H1 (cell line): ENCODE measurements at regions of chr7 and their contacts with region 1.

Region 1: DNA sequence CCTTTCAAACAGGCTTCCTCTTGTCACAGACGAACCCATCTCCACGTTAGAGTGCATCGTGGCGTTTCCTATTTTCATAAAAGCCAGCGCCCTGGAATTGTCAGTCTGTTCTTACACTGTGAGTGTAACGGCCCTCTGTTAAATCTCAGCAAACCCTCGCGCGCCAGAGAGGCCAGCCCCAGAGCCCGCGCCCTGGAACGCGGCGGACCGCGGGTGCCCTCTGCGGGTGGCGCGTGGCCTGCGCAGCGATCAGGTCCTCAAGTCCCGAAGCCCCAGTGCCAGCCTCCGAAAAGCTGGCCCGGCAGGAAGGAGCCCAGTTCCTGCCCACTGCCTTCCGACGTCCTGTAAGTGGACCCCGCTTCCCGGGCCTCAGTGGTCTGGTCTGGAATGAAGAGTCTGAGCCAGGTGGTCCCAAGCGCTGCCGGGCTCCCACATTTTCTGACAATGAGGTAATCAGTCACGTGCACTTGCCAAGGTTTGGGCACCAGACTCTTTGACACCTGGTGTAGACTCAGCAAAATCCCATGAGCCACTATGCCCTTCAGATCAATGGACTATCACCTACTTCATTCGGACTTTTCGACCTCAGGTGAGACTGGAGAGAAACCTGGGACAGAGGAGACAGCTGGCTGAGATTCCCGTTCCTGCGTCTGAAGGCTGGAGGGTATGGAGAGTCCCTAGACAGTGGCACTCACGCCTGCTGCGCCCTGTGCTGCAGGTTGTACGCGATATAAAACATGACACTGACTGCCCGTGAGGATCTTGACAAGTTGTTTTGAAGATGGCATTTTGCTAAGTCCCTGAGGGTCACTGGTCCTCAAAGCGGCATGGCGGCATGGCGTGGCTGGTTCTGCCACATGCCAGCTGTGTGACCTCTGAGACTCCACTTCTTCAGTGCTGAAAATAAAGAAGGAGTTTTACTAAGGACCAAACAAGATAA is 109.4 kb upstream of the LANCL2 start:
- DNase-seq: peak; percentile 46 to 87
- H3K4me3 ChIP-seq: peak overlapping the region; percentile 32 to 69 (median 61)
- H3K27ac ChIP-seq: no peak overlapping the region
- H3K4me1 ChIP-seq: peaks cover 0 to 4% (median 2%) of the 10 kb centered on the region in 4 experiments; a peak in 3 of 7 replicates
- H3K27me3 ChIP-seq: peaks cover 11 to 41% (median 27%) of the 10 kb centered on the region in 4 experiments
- CTCF ChIP-seq: peak; percentile 85 to 90 (median 89)
- EP300 ChIP-seq: no peak
- POLR2A ChIP-seq: no peak
- RAD21 ChIP-seq: peak; percentile 86 to 93

Region 2: DNA sequence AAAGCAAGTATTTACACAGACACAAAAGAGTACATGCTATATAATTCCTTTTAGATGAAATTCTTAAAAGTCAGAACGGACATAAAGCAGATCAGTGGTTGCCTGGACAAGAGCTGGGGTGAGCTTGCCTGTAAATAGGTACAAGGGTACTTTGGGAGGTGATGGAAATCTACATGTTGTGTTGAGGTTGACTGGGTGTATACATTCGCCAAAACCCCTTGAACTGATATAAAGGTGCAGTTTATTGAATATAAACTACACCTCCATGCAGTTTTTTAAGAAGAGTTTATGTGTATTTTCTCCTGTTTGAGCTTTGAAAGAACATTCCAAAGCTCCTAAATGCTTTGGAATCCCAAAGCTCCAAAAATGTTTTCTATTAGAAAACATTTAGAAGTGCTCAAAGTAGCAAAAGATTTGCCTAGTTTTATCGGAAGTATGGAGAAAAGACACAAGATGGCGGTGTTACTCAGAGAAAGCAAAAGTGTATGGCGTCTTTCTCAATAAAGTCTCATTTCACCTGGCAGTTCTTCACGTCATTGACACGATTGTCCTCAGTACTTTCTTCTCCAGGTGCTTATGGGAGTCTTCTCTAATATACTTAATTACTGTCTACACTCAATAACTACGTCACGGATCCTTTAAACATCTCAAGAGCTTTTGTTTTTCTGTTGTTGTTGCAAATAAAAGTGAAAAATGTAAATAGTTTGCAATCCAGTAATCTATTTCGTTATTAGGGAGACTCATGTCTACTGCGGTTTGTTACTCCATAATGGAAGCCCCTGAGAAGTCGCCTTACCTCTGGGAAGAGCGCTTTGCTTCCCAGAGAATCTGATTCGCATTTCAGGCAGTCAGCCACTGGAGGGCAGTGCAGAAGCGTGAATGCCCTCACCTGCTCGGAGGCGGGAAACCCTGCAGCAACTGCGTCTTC is 482.0 kb before region 1 on chr7:
- CTCF ChIA-PET with region 1: interaction called, 41 read pairs
- POLR2A ChIA-PET with region 1: no interaction called
- DNase-seq: peak; percentile 81 to 91
- H3K4me3 ChIP-seq: peak overlapping the region in 1 of 4 experiments; percentile 7; a peak in 1 of 8 replicates
- H3K27ac ChIP-seq: no peak overlapping the region
- H3K4me1 ChIP-seq: no peaks in the 10 kb centered on the region
- H3K27me3 ChIP-seq: no peaks in the 10 kb centered on the region
- CTCF ChIP-seq: peak; percentile 85 to 94 (median 89)
- EP300 ChIP-seq: no peak
- POLR2A ChIP-seq: no peak
- RAD21 ChIP-seq: peak; percentile 97 to 98

Region 3: DNA sequence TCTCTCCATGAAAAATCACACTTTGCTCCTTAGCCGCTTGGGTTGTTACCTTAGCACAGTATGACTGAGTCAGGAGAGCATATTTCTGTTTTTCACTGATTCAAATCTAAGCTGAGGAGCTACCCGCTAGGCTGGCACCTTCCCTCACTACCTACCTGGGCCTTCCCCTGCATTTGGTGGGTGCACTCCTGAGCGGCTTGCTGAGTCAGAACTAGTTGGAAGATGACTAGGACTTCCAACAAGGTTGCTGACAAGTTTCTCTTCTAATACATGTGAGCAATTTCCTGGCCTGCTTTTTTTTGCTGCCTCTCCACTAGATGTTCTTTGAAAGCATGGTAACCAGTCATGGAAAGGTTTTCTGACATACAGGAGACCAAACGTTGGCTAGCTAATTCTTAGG is 452.9 kb before region 1 on chr7:
- CTCF ChIA-PET with region 1: interaction called, 15 read pairs
- POLR2A ChIA-PET with region 1: no interaction called
- DNase-seq: no peak
- H3K4me3 ChIP-seq: no peak overlapping the region
- H3K27ac ChIP-seq: no peak overlapping the region
- H3K4me1 ChIP-seq: no peaks in the 10 kb centered on the region; a peak in 1 of 7 replicates
- H3K27me3 ChIP-seq: no peaks in the 10 kb centered on the region
- CTCF ChIP-seq: no peak
- EP300 ChIP-seq: no peak
- POLR2A ChIP-seq: no peak
- RAD21 ChIP-seq: no peak

Region 4: GRCh38 chr7:54877683-54878082 is 378.1 kb before region 1 on chr7:
- CTCF ChIA-PET with region 1: interaction called, 14 read pairs
- POLR2A ChIA-PET with region 1: no interaction called
- DNase-seq: no peak
- H3K4me3 ChIP-seq: no peak overlapping the region
- H3K27ac ChIP-seq: no peak overlapping the region
- H3K4me1 ChIP-seq: peaks cover 0 to 3% (median 1%) of the 10 kb centered on the region in 4 experiments; a peak in 5 of 7 replicates
- H3K27me3 ChIP-seq: no peaks in the 10 kb centered on the region
- CTCF ChIP-seq: no peak
- EP300 ChIP-seq: no peak
- POLR2A ChIP-seq: no peak
- RAD21 ChIP-seq: peak in 1 of 2 experiments; percentile 39; a peak in 1 of 4 replicates

Region 5: DNA sequence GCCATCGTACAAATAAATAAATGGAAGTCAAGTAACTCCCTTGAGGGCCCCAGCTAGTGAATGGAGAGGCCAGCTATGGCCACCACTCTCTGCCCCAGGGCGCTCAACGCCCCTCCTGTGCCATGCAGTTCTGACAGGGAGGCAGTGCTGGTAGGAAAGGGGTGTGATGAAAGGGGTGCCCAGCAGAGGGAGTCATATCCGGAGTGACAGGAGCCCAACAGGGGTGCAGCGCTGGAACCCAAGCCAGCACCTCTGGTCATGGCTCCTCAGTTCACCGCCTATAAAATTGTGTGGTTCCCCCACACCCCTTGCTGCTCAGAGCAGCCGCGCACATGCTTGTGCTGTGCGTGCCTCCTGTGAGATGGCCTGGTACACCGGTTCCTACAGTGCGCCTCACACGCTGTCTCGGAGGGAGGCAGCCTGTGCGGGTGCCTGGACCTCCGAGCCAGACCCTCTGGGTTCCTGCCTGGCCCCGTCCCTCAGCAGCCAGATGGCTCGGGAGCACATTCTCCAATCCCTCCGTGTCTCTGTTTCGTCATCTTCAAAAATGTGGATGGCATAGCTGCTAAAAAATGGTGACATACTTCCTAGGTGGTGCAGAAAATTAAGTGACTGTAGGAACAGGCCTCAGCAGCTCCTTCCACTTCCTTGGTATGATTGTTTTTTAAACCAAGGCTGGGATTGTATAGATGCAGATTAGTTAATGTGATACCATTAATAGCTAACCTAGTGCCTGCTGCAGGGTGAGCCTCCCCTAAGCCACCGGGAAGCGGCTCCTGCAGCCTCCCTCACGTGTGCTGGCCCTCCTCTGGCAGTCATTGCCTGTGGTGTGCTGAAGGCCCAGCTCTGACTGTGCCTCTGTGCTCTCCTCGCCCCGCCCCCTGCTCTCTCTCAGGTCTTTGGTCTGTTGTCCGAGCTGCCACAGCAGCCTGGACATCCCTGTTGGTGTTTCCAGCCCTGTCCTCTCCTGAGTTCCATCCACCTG is 111.1 kb before region 1 on chr7:
- CTCF ChIA-PET with region 1: interaction called, 31 read pairs
- POLR2A ChIA-PET with region 1: no interaction called
- DNase-seq: peak in 1 of 2 experiments; percentile 75
- H3K4me3 ChIP-seq: no peak overlapping the region
- H3K27ac ChIP-seq: no peak overlapping the region
- H3K4me1 ChIP-seq: no peaks in the 10 kb centered on the region
- H3K27me3 ChIP-seq: no peaks in the 10 kb centered on the region
- CTCF ChIP-seq: peak; percentile 58 to 72 (median 65)
- EP300 ChIP-seq: no peak
- POLR2A ChIP-seq: no peak
- RAD21 ChIP-seq: peak; percentile 53 to 65

Region 6: DNA sequence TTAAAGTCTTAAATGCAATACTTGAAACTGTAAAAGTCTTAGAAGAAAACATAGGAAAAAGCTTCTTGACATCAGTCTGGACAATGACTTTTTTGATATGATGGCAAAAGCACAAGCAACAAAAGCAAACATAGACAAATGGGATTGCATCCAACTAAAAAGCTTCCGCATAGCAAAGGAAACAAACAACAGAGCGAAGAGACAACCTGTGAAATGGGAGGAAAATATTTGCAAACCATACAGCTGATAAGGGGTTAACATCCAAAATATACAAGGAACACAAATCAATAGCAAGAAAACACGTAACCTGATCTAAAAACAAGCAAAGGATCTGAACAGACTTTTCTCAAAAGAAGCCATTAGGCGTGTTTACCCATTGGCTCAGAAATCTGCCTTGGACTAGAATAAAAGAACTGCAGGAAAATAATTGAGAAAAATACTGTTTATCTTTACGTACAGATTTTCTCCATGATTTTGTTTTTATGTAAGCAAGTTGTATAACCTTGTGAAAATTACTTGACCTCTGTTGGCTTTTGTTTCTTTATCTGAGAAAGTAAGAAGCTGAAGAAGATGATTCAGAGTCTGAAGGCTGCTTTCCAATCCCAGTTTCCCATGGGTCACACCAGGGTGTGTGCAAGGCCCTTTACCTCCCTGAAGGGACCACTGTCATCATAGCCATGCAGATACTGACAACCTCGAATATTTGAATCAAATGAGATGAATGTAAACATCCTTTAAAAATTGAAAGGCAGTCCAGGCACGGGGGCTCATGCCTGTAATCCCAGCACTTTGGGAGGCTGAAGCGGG is 10.3 kb after region 1 on chr7:
- CTCF ChIA-PET with region 1: interaction called, 14 read pairs
- POLR2A ChIA-PET with region 1: no interaction called
- DNase-seq: no peak
- H3K4me3 ChIP-seq: no peak overlapping the region
- H3K27ac ChIP-seq: no peak overlapping the region
- H3K4me1 ChIP-seq: no peaks in the 10 kb centered on the region
- H3K27me3 ChIP-seq: no peaks in the 10 kb centered on the region
- CTCF ChIP-seq: no peak
- EP300 ChIP-seq: no peak
- POLR2A ChIP-seq: no peak
- RAD21 ChIP-seq: no peak

Region 7: GRCh38 chr7:55546829-55547228 is 291.1 kb after region 1 on chr7:
- CTCF ChIA-PET with region 1: no interaction called
- POLR2A ChIA-PET with region 1: no interaction called
- DNase-seq: no peak
- H3K4me3 ChIP-seq: no peak overlapping the region
- H3K27ac ChIP-seq: 0 out of 2 replicates have a peak overlapping the region, but pooled peaks have one; percentile 9
- H3K4me1 ChIP-seq: peaks cover 5 to 18% (median 12%) of the 10 kb centered on the region in 4 experiments
- H3K27me3 ChIP-seq: no peaks in the 10 kb centered on the region
- CTCF ChIP-seq: no peak
- EP300 ChIP-seq: no peak
- POLR2A ChIP-seq: no peak
- RAD21 ChIP-seq: no peak